K562 (cell line): ENCODE measurements at regions of chr16 and their contacts with region 1.

Region 1: DNA sequence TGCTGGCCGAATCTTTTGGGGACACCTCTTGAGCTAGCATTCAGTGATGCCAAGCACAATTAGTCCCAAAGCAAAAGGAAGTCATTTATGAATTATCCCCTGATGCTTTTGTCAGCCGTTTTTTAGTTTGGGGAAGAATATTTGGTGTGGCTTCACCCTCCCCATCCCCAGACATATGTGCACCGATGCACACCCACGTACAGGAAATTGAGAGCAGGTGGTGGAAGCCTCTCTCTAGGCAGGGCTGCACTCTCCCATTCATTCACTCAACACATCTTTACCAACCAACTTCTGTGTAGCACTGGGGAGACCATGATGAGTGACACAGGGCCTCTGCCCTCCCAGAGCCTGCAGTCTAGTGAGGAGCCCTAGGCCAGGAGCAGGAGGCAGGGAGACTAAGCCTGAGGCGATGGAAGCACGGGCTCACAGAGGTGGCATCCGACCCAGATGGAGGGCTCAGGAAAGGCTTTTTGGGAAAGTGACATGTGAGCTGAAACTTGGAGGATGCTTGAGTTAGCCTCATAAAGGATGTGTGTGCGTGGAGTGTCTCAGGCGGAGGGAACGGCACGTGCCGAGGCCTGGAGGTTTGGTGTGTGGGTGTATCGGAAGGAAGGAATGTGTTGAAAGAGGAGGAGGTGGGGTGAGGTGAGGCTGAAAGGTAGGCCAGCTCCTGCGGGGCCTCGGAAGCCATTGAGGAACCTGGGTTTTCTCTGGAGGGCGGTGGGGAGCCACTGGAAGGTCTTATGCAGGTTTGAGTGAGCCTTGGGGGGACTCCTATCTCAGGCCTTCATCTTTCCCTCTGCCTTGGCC is 43.8 kb downstream of the PSME3IP1 start:
- DNase-seq: no peak
- ATAC-seq: no peak
- H3K4me3 ChIP-seq: no peak overlapping the region
- H3K27ac ChIP-seq: no peak overlapping the region
- H3K4me1 ChIP-seq: peaks cover 25 to 39% of the 10 kb centered on the region in 2 experiments
- H3K27me3 ChIP-seq: no peaks in the 10 kb centered on the region
- CTCF ChIP-seq: no peak
- EP300 ChIP-seq: no peak
- POLR2A ChIP-seq: no peak
- RAD21 ChIP-seq: no peak

Region 2: DNA sequence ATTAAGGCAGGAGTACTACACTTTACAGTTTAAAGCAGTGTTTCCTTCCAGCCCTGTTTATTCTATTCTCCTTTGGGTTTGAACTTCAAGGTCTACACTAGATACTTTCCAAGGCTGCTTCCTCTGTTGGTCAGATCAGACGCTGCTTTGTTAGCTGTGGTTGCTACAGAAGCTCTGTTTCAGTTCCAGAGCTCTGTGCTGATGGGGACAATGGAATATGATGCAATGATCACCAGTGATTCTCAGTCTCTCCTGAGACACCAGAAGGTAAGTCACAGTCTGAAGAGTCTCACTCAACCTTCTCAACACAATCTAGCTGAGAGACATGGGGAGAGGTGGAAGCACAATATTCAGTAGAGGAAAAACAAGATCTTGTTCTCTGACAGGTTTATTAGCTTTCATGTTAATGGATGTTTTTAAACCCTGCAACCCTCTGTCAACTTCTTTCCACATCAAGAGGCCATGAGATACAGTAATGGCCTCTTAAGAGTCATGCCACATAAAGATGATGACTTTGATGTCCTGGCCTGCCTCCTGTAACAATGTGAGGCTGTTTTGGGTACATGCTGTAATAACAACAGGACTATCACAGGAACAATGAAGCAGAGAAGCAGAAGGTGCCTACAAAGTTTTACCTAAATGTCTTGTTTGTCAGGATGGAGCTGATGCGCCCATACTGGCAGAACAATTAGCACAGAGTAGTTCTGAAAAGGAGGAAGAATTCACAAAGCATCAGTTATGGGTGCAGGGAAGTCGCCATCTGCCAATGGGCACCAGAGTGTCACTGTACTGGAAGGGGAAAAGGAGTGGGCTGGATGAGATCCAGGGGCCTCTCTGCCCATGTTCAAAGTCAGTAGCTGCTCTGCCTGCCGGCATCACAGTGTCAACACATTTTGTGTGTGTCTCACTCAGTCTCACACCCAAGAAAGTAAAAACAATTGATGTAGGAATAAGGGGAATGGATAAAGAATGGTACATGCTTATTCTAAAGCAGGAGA is 10.4 kb after region 1 on chr16:
- CTCF ChIA-PET with region 1: no interaction called
- POLR2A ChIA-PET with region 1: interaction called, 27 read pairs
- in situ Hi-C with region 1: no loop called
- intact Hi-C with region 1: no loop called
- DNase-seq: no peak
- ATAC-seq: no peak
- H3K4me3 ChIP-seq: no peak overlapping the region
- H3K27ac ChIP-seq: no peak overlapping the region
- H3K4me1 ChIP-seq: peaks cover 0 to 2% of the 10 kb centered on the region in 2 experiments; a peak in 1 of 5 replicates
- H3K27me3 ChIP-seq: no peaks in the 10 kb centered on the region
- CTCF ChIP-seq: no peak
- EP300 ChIP-seq: no peak
- POLR2A ChIP-seq: no peak
- RAD21 ChIP-seq: no peak